ENCODE measurements at regions of chr1 and their contacts with region 1.

Region 1: DNA sequence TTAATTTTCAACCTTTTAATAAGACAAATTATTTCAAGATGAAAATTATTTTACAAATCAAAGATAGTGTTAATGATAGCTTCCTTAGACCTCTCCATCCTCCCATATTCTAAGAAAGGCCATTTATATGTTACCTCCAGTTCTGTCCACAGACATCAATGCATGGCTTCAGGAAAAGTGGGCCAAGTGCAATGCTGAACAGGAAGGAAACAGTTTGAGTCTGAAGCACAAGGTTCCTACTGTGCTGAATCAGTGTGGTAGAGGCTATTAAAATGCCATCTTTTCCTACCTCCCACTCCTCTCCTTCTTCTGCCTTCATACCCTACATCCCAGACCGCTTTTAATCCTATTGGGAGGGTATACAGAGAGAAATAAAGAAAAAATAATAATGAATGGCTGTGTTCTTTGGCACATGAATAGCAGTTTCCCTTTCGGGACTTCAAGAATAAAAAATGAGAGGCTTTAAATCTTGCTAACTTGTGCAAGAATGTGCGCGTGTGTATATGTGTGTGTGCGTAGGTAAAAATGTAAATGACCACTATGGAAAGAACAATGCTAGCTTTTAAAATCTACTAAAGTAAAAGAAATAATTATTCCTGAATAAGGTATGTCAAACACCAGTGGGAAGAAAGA is 62.6 kb upstream of the C1orf105 start:
- DNase-seq: no peak
- ATAC-seq: peak; percentile 35
- H3K4me3 ChIP-seq: 0 out of 2 replicates have a peak overlapping the region, but pooled peaks have one; percentile 12
- H3K27ac ChIP-seq: peak overlapping the region; percentile 96
- H3K4me1 ChIP-seq: peaks cover 48% of the 10 kb centered on the region
- H3K27me3 ChIP-seq: no peaks in the 10 kb centered on the region
- CTCF ChIP-seq: no peak
- EP300 ChIP-seq: no peak
- POLR2A ChIP-seq: no peak
- RAD21 ChIP-seq: no peak

Region 2: DNA sequence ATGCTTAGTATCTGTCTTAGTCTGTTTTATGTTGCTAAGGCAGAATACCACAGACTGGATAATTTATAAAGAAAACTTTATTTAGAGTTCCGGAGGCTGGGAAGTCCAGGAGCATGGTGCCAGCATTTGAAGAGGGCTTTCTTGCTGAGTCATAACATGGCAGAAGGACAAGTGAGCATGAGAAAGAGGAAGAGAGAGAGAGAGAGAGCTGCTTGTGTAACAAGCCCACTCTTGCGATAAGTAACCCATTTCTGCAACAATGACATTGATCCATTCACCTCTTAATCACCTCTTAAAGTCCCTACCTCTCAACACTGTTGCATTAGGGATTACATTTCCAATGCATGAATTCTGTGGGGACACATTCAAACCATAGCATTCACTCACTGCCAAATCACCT is 747.5 kb before region 1 on chr1:
- CTCF ChIA-PET with region 1: no interaction called
- POLR2A ChIA-PET with region 1: no interaction called
- RAD21 ChIA-PET with region 1: no interaction called
- SMC1A ChIA-PET with region 1: no interaction called
- in situ Hi-C with region 1: no loop called
- intact Hi-C with region 1: loop called (anchors 10 kb)
- DNase-seq: no peak
- ATAC-seq: peak; percentile 74
- H3K4me3 ChIP-seq: no peak overlapping the region
- H3K27ac ChIP-seq: no peak overlapping the region
- H3K4me1 ChIP-seq: peaks cover 5% of the 10 kb centered on the region
- H3K27me3 ChIP-seq: no peaks in the 10 kb centered on the region
- CTCF ChIP-seq: no peak
- EP300 ChIP-seq: peak; percentile 38 to 68; a peak in 3 of 4 replicates
- POLR2A ChIP-seq: no peak
- RAD21 ChIP-seq: no peak

Region 3: GRCh38 chr1:172203135-172203823 is 154.6 kb before region 1 on chr1:
- CTCF ChIA-PET with region 1: no interaction called
- POLR2A ChIA-PET with region 1: no interaction called
- RAD21 ChIA-PET with region 1: no interaction called
- SMC1A ChIA-PET with region 1: no interaction called
- in situ Hi-C with region 1: no loop called
- intact Hi-C with region 1: no loop called
- DNase-seq: no peak
- ATAC-seq: no peak
- H3K4me3 ChIP-seq: no peak overlapping the region
- H3K27ac ChIP-seq: no peak overlapping the region
- H3K4me1 ChIP-seq: no peaks in the 10 kb centered on the region
- H3K27me3 ChIP-seq: no peaks in the 10 kb centered on the region
- CTCF ChIP-seq: no peak
- EP300 ChIP-seq: no peak
- POLR2A ChIP-seq: no peak
- RAD21 ChIP-seq: no peak

Region 4: GRCh38 chr1:172338295-172338735 is 19.6 kb before region 1 on chr1:
- CTCF ChIA-PET with region 1: interaction called, 85 read pairs
- POLR2A ChIA-PET with region 1: interaction called, 63 read pairs
- RAD21 ChIA-PET with region 1: interaction called, 407 read pairs
- SMC1A ChIA-PET with region 1: interaction called, 489 read pairs
- in situ Hi-C with region 1: no loop called
- intact Hi-C with region 1: loop called (anchors 1 kb)
- DNase-seq: peak; percentile 74
- ATAC-seq: peak; percentile 74
- H3K4me3 ChIP-seq: peak overlapping the region; percentile 28; the same call in 1 of the 2 replicates
- H3K27ac ChIP-seq: peak overlapping the region; percentile 98
- H3K4me1 ChIP-seq: peaks cover 44% of the 10 kb centered on the region
- H3K27me3 ChIP-seq: no peaks in the 10 kb centered on the region
- CTCF ChIP-seq: no peak
- EP300 ChIP-seq: peak in 1 of 2 experiments; percentile 34; a peak in 1 of 4 replicates
- POLR2A ChIP-seq: no peak
- RAD21 ChIP-seq: no peak

Region 5: DNA sequence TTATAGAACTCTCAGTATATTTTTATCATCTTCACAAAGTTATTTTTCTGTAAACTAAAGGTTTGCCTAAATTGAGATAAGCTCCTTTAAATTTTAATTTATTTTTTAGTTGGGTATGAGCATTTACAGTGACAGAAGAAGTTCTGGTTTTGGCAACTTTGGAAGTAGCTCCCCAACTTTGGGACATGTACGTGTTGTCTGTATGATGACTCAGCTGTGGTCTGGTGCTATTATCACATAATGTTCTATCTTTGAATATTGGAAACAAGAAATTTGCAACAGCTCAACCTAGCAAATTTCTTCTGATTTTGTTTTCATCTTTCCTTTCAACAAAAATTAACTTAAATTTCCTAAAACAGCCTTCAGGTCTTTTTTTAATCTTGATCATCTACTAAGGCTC is 16.0 kb after region 1 on chr1:
- CTCF ChIA-PET with region 1: interaction called, 64 read pairs
- POLR2A ChIA-PET with region 1: interaction called, 12 read pairs
- RAD21 ChIA-PET with region 1: interaction called, 90 read pairs
- SMC1A ChIA-PET with region 1: interaction called, 336 read pairs
- in situ Hi-C with region 1: no loop called
- intact Hi-C with region 1: no loop called
- DNase-seq: no peak
- ATAC-seq: no peak; the same call in 2 of the 3 replicates
- H3K4me3 ChIP-seq: no peak overlapping the region
- H3K27ac ChIP-seq: no peak overlapping the region
- H3K4me1 ChIP-seq: peaks cover 4% of the 10 kb centered on the region; the same call in 1 of the 2 replicates
- H3K27me3 ChIP-seq: no peaks in the 10 kb centered on the region
- CTCF ChIP-seq: no peak
- EP300 ChIP-seq: no peak
- POLR2A ChIP-seq: no peak
- RAD21 ChIP-seq: no peak

Region 6: GRCh38 chr1:172390683-172391551 is 33.0 kb after region 1 on chr1:
- CTCF ChIA-PET with region 1: interaction called, 131 read pairs
- POLR2A ChIA-PET with region 1: interaction called, 73 read pairs
- RAD21 ChIA-PET with region 1: interaction called, 394 read pairs
- SMC1A ChIA-PET with region 1: interaction called, 458 read pairs
- in situ Hi-C with region 1: no loop called
- intact Hi-C with region 1: loop called (anchors 1 kb)
- DNase-seq: peak; percentile 96
- ATAC-seq: peak; percentile 82
- H3K4me3 ChIP-seq: peak overlapping the region; percentile 11; the same call in 1 of the 2 replicates
- H3K27ac ChIP-seq: peak overlapping the region; percentile 98
- H3K4me1 ChIP-seq: peaks cover 56% of the 10 kb centered on the region
- H3K27me3 ChIP-seq: no peaks in the 10 kb centered on the region
- CTCF ChIP-seq: no peak
- EP300 ChIP-seq: no peak
- POLR2A ChIP-seq: peak; percentile 32; the same call in 1 of the 2 replicates
- RAD21 ChIP-seq: peak; percentile 34; the same call in 1 of the 2 replicates

Measured in GM12878 (cell line).